CD4-positive, alpha-beta memory T cell (primary cell): ENCODE measurements at regions of chr9 and their contacts with region 1.

Region 1: GRCh38 chr9:91036826-91037510 is 235.3 kb downstream of the SYK start:
- DNase-seq: peak; percentile 42 to 61 (median 51)
- H3K4me3 ChIP-seq: no peak overlapping the region
- H3K4me3 Mint-ChIP-seq: peak overlapping the region in 3 of 8 donors; percentile 33 to 72 (median 52)
- H3K27ac ChIP-seq: no peak overlapping the region
- H3K27ac Mint-ChIP-seq: peak overlapping the region in 1 of 7 donors; percentile 25
- H3K4me1 ChIP-seq: peaks cover 12% of the 10 kb centered on the region
- H3K4me1 Mint-ChIP-seq: peaks cover 11 to 15% (median 12%) of the 10 kb centered on the region in 4 donors
- H3K27me3 ChIP-seq: no peaks in the 10 kb centered on the region
- H3K27me3 Mint-ChIP-seq: peaks cover 13 to 15% of the 10 kb centered on the region in 2 donors

Region 2: DNA sequence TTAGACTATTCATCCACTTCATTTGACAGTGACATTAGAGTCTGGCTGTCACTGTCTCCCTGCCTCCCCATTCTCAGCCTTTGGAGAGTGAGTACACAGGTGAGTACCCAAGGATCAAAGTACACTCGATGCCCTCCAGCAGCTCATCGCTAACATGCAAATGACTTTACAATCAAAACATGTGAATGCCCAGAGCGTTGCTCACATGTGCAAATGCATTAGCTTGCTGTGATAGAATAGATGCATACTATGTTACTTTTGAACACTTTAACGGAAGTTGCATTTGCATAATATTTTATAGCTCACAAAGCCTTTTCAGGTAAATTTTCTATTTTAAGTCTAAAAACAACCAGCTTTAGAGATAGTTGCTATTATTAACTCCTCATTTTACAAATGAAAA is 127.7 kb before region 1 on chr9:
- CTCF ChIA-PET with region 1: no interaction called
- POLR2A ChIA-PET with region 1: no interaction called
- intact Hi-C with region 1: no loop called
- DNase-seq: no peak
- H3K4me3 ChIP-seq: no peak overlapping the region
- H3K4me3 Mint-ChIP-seq: no peak overlapping the region
- H3K27ac ChIP-seq: no peak overlapping the region
- H3K27ac Mint-ChIP-seq: no peak overlapping the region
- H3K4me1 ChIP-seq: no peaks in the 10 kb centered on the region
- H3K4me1 Mint-ChIP-seq: no peaks in the 10 kb centered on the region
- H3K27me3 ChIP-seq: no peaks in the 10 kb centered on the region
- H3K27me3 Mint-ChIP-seq: peaks cover 5 to 8% of the 10 kb centered on the region in 2 donors

Region 3: GRCh38 chr9:91681461-91682305 is 644.7 kb after region 1 on chr9:
- CTCF ChIA-PET with region 1: no interaction called
- POLR2A ChIA-PET with region 1: no interaction called
- intact Hi-C with region 1: loop called (anchors 5 kb)
- DNase-seq: peak; percentile 29 to 53 (median 38)
- H3K4me3 ChIP-seq: no peak overlapping the region
- H3K4me3 Mint-ChIP-seq: peak overlapping the region in 3 of 8 donors; percentile 32 to 40 (median 38)
- H3K27ac ChIP-seq: no peak overlapping the region
- H3K27ac Mint-ChIP-seq: no peak overlapping the region
- H3K4me1 ChIP-seq: peaks cover 3% of the 10 kb centered on the region
- H3K4me1 Mint-ChIP-seq: no peaks in the 10 kb centered on the region
- H3K27me3 ChIP-seq: peaks cover 6% of the 10 kb centered on the region
- H3K27me3 Mint-ChIP-seq: peaks cover 15 to 29% of the 10 kb centered on the region in 2 donors

Region 4: GRCh38 chr9:91727316-91727861 is 690.4 kb after region 1 on chr9:
- CTCF ChIA-PET with region 1: interaction called, 3 read pairs
- POLR2A ChIA-PET with region 1: no interaction called
- intact Hi-C with region 1: loop called (anchors 1 kb)
- DNase-seq: peak in 4 of 5 donors; percentile 17 to 30 (median 26)
- H3K4me3 ChIP-seq: no peak overlapping the region
- H3K4me3 Mint-ChIP-seq: no peak overlapping the region
- H3K27ac ChIP-seq: no peak overlapping the region
- H3K27ac Mint-ChIP-seq: no peak overlapping the region
- H3K4me1 ChIP-seq: no peaks in the 10 kb centered on the region
- H3K4me1 Mint-ChIP-seq: no peaks in the 10 kb centered on the region
- H3K27me3 ChIP-seq: no peaks in the 10 kb centered on the region
- H3K27me3 Mint-ChIP-seq: peaks cover 0 to 5% of the 10 kb centered on the region in 2 donors